ENCODE measurements at regions of chr4 and their contacts with region 1.

Region 1: DNA sequence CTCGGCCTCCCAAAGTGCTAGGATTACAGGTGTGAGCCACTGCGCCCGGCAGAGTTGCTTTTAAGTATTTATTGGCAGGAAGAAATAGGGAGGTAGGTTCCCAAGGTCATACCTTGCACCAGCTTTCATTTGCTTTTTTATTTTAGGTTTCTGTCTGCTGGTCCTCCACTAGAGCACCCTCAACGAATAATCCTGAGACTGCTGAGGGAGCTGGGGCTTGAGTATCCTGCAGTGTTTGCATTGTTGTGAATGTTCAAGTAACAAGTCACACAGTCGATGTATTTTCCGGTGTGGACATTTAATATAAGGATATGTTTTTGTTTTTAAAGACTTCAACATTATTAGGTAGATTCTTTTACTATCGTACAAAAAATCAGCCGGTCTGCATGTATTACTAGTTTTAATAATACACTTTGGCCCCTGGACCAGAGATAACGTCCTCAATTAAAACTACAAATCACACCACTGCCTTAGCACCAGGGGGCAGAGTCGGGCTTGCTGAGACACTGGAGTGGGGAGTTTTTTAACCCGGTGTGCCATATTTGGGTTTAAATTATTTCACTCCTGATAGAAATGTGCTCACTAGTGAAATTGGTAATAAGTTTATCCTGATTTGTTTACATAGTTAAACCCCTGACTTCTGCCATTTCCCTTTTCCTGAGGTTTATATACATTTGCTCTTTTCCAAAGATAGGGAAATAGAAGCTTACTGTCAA is 11.6 kb downstream of the SMIM20 start:
- DNase-seq: peak in 1 of 2 experiments; percentile 64
- H3K4me3 ChIP-seq: no peak overlapping the region
- H3K27ac ChIP-seq: no peak overlapping the region
- H3K4me1 ChIP-seq: no peaks in the 10 kb centered on the region; a peak in 2 of 7 replicates
- H3K27me3 ChIP-seq: no peaks in the 10 kb centered on the region
- CTCF ChIP-seq: peak; percentile 59 to 69 (median 69)
- EP300 ChIP-seq: no peak
- POLR2A ChIP-seq: no peak
- RAD21 ChIP-seq: peak; percentile 74 to 83

Region 2: DNA sequence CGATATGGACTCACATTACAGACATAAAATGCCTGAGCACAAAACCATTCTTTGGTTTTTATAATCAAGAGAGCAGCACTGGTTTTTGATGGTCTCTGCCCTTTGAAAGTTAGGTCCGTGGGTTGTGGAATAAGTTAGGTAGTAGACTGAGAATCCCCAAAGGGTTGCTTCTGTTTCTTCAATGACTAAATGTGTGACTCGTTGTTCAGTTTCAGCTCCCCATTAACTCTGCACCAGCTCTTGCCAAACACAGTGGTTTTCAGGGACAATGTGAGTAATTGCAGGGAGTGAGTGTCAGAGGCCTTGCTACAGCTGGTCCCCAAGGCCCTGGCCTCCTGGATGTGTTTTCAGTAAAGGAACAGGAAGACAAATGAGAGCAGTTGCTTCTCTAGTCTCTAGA is 13.1 kb after region 1 on chr4:
- CTCF ChIA-PET with region 1: interaction called, 12 read pairs
- POLR2A ChIA-PET with region 1: no interaction called
- DNase-seq: no peak
- H3K4me3 ChIP-seq: no peak overlapping the region
- H3K27ac ChIP-seq: no peak overlapping the region
- H3K4me1 ChIP-seq: no peaks in the 10 kb centered on the region
- H3K27me3 ChIP-seq: no peaks in the 10 kb centered on the region
- CTCF ChIP-seq: no peak
- EP300 ChIP-seq: no peak
- POLR2A ChIP-seq: no peak
- RAD21 ChIP-seq: no peak

Region 3: GRCh38 chr4:25981749-25982148 is 56.1 kb after region 1 on chr4:
- CTCF ChIA-PET with region 1: interaction called, 29 read pairs
- POLR2A ChIA-PET with region 1: interaction called, 4 read pairs
- DNase-seq: no peak
- H3K4me3 ChIP-seq: no peak overlapping the region
- H3K27ac ChIP-seq: no peak overlapping the region
- H3K4me1 ChIP-seq: peaks cover 0 to 8% (median 2%) of the 10 kb centered on the region in 4 experiments; a peak in 5 of 7 replicates
- H3K27me3 ChIP-seq: no peaks in the 10 kb centered on the region
- CTCF ChIP-seq: no peak
- EP300 ChIP-seq: no peak
- POLR2A ChIP-seq: no peak
- RAD21 ChIP-seq: no peak

Region 4: DNA sequence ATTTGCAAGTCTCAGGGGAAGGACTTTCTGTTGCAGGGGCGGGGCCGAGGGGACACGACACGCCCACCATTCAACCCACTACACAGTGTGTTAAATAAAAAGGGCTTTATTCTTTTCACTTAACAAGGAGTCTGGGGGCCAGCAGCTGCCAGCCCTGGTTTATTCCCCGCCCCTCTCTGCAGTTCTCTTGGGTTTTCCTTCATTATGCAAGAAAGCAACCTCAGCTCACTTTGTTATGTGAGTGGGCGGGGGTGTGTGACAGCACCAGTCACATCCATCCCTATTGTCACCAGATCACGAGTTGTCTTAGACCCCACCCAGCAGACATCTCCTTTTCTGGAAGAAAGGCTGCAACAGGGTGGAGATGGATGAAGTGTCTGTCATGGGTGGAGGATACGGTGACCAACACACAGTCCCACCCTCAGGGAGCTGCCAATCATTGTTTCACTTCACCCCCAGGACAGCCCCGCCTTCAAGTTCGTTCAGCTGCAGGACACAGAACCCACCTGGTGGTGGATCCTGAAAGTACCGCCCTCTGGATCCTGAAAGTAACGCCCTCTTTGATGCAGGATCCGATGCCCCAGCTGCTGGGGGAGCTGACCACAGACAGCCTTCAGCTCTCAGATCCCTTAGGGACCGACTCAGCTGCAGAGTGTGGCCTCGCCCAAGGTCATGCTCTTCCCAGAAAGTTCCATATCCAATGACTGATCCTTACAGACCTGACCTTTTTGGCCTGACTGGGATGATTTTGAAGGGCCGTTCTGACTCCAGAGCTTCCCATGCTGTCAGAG is 67.9 kb after region 1 on chr4:
- CTCF ChIA-PET with region 1: interaction called, 29 read pairs
- POLR2A ChIA-PET with region 1: no interaction called
- DNase-seq: peak; percentile 93 to 97
- H3K4me3 ChIP-seq: peak overlapping the region in 2 of 4 experiments; percentile 1 to 45; a peak in 3 of 8 replicates
- H3K27ac ChIP-seq: peak overlapping the region; percentile 46; the same call in 1 of the 2 replicates
- H3K4me1 ChIP-seq: peaks cover 0 to 5% (median 3%) of the 10 kb centered on the region in 4 experiments; a peak in 3 of 7 replicates
- H3K27me3 ChIP-seq: no peaks in the 10 kb centered on the region
- CTCF ChIP-seq: peak; percentile 70 to 83 (median 78)
- EP300 ChIP-seq: peak in 1 of 2 experiments; percentile 22; a peak in 1 of 3 replicates
- POLR2A ChIP-seq: peak in 1 of 2 experiments; percentile 10; a peak in 1 of 3 replicates
- RAD21 ChIP-seq: peak; percentile 61 to 70

Region 5: DNA sequence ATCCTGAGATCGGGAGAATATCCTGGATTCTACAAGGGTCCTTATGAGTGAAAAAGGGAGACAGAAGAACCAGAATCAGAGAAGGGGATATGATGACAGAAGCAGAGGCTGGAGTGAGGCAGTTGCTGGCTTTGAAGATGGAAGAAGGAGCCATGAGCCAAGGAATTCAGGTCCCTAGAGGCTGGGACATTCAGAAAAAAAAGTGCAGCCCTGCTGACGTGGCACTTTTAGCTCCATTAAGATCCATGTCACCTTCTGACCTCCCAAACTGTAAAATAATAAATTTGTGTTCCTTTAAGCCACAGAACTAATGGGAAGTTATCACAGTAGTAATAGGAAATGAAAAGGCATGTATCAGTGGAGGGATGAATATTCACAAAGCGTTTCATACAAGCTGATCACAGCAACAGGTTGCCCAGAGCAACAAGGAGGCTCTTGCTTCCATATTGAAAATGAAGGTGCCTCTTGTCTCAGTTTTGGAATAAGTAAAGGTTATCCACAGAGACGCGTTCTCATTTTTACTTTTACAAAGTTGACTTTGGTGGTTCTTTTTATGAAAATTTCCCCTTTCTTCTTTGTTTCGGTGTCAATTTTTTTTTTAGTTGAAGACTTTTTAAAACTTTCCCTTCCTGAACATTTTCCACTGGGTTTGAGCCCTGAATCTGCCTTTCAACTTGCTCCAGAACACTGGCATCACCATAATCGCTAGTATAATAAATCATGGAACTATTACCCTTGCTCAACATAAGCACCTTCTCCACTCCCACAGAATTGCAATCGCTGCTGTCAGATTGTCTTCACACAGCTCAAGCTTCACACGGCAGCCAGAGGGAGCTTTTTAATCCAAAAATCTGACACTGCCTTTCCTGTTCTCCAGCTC is 267.5 kb after region 1 on chr4:
- CTCF ChIA-PET with region 1: no interaction called
- POLR2A ChIA-PET with region 1: no interaction called
- DNase-seq: no peak
- H3K4me3 ChIP-seq: no peak overlapping the region
- H3K27ac ChIP-seq: no peak overlapping the region
- H3K4me1 ChIP-seq: peaks cover 0 to 2% (median 0%) of the 10 kb centered on the region in 4 experiments; a peak in 1 of 7 replicates
- H3K27me3 ChIP-seq: no peaks in the 10 kb centered on the region
- CTCF ChIP-seq: no peak
- EP300 ChIP-seq: no peak
- POLR2A ChIP-seq: no peak
- RAD21 ChIP-seq: no peak; a peak in 1 of 4 replicates